PC-9 (cell line): ENCODE measurements at regions of chr11 and their contacts with region 1.

Region 1: DNA sequence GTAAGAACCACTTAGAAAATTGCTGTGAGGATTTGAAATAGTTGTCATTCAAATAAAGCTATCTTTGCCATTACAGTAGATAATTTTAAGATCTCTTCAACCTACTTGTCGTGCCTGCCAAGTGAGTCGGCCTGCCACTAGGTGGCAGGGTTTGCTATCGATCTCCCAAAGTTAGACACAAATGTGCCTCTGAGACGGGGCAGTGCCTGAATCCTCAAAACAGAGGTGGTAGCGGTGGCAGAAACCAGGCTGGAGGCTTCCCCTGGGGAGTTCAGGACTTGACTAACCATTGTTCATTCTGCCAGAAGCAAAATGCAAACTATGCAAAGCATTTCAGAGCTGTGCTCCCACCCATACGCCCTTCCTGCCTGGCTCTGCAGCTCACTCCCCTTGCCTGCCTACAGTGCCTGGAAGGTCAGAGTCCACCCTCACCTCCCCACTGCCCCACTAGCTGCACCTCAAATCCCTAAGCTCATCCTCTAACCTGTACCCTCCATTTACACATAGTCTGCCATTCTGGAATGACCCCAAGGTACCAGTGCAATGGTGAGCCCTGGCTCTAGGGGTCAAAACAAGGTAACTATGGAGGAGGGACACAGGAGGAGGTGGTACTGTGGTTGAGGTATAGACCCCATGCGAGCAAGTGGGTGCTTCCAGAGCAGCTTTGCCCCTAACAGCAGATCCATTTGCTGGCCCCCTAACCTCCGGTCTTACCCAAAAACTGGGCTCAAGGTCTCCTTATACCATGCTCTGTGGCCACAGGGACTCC is 82.1 kb downstream of the C11orf58 start:
- DNase-seq: peak; percentile 58 to 78
- H3K4me3 ChIP-seq: no peak overlapping the region
- H3K27ac ChIP-seq: peak overlapping the region; percentile 47
- H3K4me1 ChIP-seq: peaks cover 30% of the 10 kb centered on the region
- H3K27me3 ChIP-seq: no peaks in the 10 kb centered on the region
- CTCF ChIP-seq: peak; percentile 81

Region 2: GRCh38 chr11:16779436-16779835 is 41.1 kb before region 1 on chr11:
- CTCF ChIA-PET with region 1: no interaction called
- POLR2A ChIA-PET with region 1: no interaction called
- intact Hi-C with region 1: no loop called
- DNase-seq: no peak
- H3K4me3 ChIP-seq: no peak overlapping the region
- H3K27ac ChIP-seq: no peak overlapping the region
- H3K4me1 ChIP-seq: peaks cover 14% of the 10 kb centered on the region
- H3K27me3 ChIP-seq: no peaks in the 10 kb centered on the region
- CTCF ChIP-seq: no peak

Region 3: GRCh38 chr11:16841984-16842383 is 21.5 kb after region 1 on chr11:
- CTCF ChIA-PET with region 1: interaction called, 14 read pairs
- POLR2A ChIA-PET with region 1: no interaction called
- intact Hi-C with region 1: no loop called
- DNase-seq: no peak
- H3K4me3 ChIP-seq: no peak overlapping the region
- H3K27ac ChIP-seq: no peak overlapping the region
- H3K4me1 ChIP-seq: no peaks in the 10 kb centered on the region
- H3K27me3 ChIP-seq: no peaks in the 10 kb centered on the region
- CTCF ChIP-seq: no peak

Region 4: DNA sequence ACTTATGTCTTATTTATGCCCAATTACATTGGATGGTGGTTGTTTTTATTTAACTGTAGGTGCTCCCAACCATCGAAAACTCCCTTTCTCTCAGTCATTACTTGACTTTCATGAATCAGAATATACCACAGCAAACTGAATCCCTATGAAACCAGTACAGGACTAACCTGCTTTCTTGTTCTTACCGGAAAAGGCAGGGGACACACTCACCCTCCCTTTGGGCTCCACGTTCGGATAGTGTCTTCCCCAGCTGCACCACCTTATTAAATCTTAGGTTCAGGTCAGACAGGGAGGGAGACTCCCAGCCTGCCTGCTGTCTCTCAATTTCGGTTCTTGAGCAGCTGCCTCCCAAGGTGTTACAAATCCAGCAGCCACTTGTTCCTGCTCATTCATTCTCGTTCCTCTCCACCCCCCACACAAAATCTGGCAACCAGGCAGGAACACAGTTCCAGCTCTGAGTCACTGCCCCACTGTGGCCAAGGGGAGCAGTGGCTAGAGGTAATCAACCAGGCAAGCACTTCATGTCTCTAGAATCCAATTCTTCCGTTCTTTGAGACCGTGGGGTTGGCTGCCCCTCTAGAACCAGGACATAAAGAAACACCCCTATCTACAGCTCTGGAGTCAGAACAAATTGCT is 60.7 kb after region 1 on chr11:
- CTCF ChIA-PET with region 1: interaction called, 11 read pairs
- POLR2A ChIA-PET with region 1: no interaction called
- intact Hi-C with region 1: loop called (anchors 1 kb)
- DNase-seq: peak; percentile 53 to 54
- H3K4me3 ChIP-seq: no peak overlapping the region
- H3K27ac ChIP-seq: peak overlapping the region; percentile 23; the same call in 1 of the 2 replicates
- H3K4me1 ChIP-seq: peaks cover 37% of the 10 kb centered on the region
- H3K27me3 ChIP-seq: no peaks in the 10 kb centered on the region
- CTCF ChIP-seq: peak; percentile 23; the same call in 1 of the 2 replicates

Region 5: GRCh38 chr11:16935518-16936302 is 115.2 kb after region 1 on chr11:
- CTCF ChIA-PET with region 1: interaction called, 3 read pairs
- POLR2A ChIA-PET with region 1: no interaction called
- intact Hi-C with region 1: loop called (anchors 5 kb)
- DNase-seq: no peak
- H3K4me3 ChIP-seq: no peak overlapping the region
- H3K27ac ChIP-seq: no peak overlapping the region
- H3K4me1 ChIP-seq: no peaks in the 10 kb centered on the region
- H3K27me3 ChIP-seq: no peaks in the 10 kb centered on the region
- CTCF ChIP-seq: peak; percentile 72

Region 6: DNA sequence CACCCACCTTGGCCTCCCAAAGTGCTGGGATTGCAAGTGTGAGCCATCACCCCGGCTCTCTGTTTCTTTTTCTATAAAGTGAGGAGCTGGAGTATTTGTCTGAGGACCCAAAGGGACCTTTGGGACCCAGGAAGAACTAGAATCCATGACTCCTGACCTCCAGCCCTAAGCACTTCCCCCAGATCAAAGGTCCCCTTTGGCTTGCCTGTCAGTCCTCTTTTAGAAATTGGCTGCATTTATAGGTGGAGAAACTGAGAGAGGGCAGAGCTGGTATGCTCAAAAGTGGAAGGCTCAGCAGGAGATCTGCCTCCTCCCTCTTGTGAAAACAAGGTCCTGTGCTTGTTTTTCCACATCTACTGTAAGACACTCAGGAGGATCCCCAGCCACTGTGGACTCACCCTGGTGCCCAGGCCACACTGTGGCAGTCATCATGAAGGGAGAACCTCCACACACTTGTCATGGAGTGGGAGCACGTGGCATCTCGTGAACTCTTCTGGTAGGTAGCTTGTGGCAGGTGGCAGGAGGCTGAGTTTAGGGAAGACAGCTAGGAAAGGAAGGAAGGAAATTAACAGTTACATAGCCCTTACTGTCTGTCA is 206.1 kb after region 1 on chr11:
- CTCF ChIA-PET with region 1: no interaction called
- POLR2A ChIA-PET with region 1: no interaction called
- intact Hi-C with region 1: no loop called
- DNase-seq: no peak
- H3K4me3 ChIP-seq: no peak overlapping the region
- H3K27ac ChIP-seq: no peak overlapping the region
- H3K4me1 ChIP-seq: no peaks in the 10 kb centered on the region
- H3K27me3 ChIP-seq: no peaks in the 10 kb centered on the region
- CTCF ChIP-seq: no peak